Activated CD8-positive, alpha-beta T cell treated with anti-CD3 and anti-CD28 coated beads for 36 hours (primary cell): ENCODE measurements at regions of chr5 and their contacts with region 1.

Region 1: DNA sequence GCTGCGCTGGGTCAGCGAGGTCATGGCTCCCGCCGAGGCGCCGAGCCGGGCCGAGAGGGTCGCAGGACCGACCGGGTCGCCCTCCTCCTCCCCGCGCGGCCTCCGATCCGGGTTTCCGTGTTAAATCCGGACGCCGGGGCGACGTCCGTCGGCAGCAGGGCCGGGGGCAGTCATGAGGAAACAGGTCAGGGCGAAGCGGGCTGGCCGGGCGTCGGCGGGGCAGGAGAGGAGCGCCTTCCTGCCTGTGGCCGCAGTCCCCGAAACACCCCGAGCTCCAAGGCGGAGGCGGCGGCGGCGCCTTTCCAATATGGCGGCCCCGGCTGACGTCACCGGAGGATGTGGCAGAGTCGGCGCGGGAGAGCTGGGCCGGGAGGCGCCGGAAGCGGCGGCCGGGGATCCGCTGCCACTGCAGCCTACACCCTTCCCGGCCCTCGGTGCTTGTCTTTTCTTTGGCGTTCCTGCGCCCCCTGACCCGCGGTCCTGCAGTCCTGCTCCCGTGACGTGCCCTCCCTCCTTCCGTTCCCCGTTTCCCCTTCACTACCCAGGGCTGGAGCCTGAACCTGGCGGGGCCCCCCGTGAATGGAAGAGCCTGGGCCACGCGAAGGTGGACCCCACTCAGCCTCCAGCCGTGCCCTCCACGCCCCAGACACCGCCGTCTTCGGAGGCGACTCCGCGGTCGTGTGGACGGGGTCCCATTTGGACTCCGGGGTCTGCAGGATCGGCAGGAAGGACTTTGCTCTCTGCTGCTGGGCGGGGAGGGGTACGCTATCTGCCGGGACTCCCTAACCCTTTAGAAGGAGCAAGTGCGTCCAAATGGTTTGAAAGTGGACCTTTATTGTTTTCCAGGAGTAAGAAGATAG is at the start of gene GOLPH3:
- DNase-seq: peak; percentile 97
- ATAC-seq: peak; percentile 88
- H3K4me3 Mint-ChIP-seq: peak within 1 kb of the TSS; percentile 94
- H3K27ac Mint-ChIP-seq: peak within 1 kb of the TSS; percentile 96
- H3K4me1 Mint-ChIP-seq: peaks cover 24% of the 10 kb centered on the region
- H3K27me3 Mint-ChIP-seq: peaks cover 3% of the 10 kb centered on the region
- CTCF ChIP-seq: no peak
- total RNA-seq, gene GOLPH3: 53.2 to 56.7 TPM

Region 2: GRCh38 chr5:32156635-32157034 is 17.6 kb before region 1 on chr5:
- CTCF ChIA-PET with region 1: interaction called, 4 read pairs
- POLR2A ChIA-PET with region 1: interaction called, 11 read pairs
- intact Hi-C with region 1: no loop called
- DNase-seq: no peak
- ATAC-seq: no peak
- H3K4me3 Mint-ChIP-seq: no peak overlapping the region
- H3K27ac Mint-ChIP-seq: no peak overlapping the region
- H3K4me1 Mint-ChIP-seq: peaks cover 42% of the 10 kb centered on the region
- H3K27me3 Mint-ChIP-seq: no peaks in the 10 kb centered on the region
- CTCF ChIP-seq: no peak

Region 3: GRCh38 chr5:32210151-32210550 is 35.9 kb after region 1 on chr5:
- CTCF ChIA-PET with region 1: interaction called, 5 read pairs
- POLR2A ChIA-PET with region 1: interaction called, 3 read pairs
- intact Hi-C with region 1: loop called (anchors 5 kb)
- DNase-seq: no peak
- ATAC-seq: no peak
- H3K4me3 Mint-ChIP-seq: no peak overlapping the region
- H3K27ac Mint-ChIP-seq: peak overlapping the region; percentile 96
- H3K4me1 Mint-ChIP-seq: peaks cover 19% of the 10 kb centered on the region
- H3K27me3 Mint-ChIP-seq: no peaks in the 10 kb centered on the region
- CTCF ChIP-seq: no peak

Region 4: DNA sequence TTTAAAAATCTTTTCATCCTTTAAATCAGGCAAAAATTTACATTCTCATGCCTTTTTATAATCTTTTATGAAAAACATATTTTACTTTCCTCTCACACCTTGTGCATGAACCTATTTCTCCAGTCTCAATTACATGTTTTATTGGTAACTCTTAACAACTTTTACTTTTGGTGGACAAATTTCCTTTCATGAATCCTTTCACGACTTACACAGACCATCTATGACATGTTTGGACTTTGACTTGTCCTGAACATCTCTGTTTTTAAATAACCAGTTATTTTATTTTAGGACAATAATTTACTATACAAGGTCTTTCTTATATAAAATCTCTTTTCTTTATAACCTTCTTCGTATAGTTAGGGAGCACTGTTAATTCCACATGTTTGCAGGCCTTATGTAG is 165.0 kb after region 1 on chr5:
- CTCF ChIA-PET with region 1: no interaction called
- POLR2A ChIA-PET with region 1: no interaction called
- intact Hi-C with region 1: no loop called
- DNase-seq: no peak
- ATAC-seq: no peak
- H3K4me3 Mint-ChIP-seq: no peak overlapping the region
- H3K27ac Mint-ChIP-seq: no peak overlapping the region
- H3K4me1 Mint-ChIP-seq: no peaks in the 10 kb centered on the region
- H3K27me3 Mint-ChIP-seq: no peaks in the 10 kb centered on the region
- CTCF ChIP-seq: no peak